ENCODE measurements at regions of chr12 and their contacts with region 1.

Region 1: DNA sequence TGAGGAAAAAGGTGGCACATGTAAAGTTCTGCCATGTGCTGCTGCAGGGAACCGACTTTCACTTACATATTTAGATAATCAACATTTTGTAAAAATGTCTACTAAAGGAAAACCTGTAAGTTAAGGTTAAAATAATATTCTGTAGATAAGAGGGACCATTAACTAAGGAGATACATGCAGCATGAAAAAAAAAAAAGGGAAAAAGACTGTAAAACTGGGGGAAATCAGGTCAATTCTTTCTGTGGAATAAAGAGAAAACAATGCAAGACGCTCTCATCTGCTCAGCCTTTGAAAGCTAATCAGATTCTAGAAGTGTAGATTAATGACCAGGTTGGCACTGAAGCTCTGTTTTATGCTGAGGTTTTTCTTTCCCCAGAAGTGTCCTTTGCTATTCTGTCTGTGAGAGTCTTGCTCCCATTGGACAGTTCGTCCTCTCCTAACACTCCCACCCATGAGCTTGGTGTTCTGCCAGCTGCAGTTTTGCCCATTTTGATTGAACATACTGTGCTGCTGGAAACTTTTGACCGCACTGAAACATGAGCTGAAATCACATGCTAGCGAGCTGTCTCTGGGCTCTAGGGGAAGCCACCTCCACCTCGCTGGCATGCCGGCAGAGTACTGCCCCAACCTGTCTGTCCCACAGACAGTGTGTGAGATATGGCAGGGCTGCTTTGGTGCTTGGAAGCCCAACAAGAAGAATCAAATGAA is 39.7 kb downstream of the PPTC7 start:
- DNase-seq: peak; percentile 100
- H3K4me3 Mint-ChIP-seq: peak overlapping the region; percentile 60
- H3K27ac Mint-ChIP-seq: peak overlapping the region; percentile 90
- H3K4me1 Mint-ChIP-seq: peaks cover 54% of the 10 kb centered on the region
- H3K27me3 Mint-ChIP-seq: no peaks in the 10 kb centered on the region
- CTCF ChIP-seq: no peak

Region 2: GRCh38 chr12:110468212-110469048 is 75.0 kb before region 1 on chr12 and contains the starts of genes FAM216A and GPN3:
- CTCF ChIA-PET with region 1: interaction called, 3 read pairs
- POLR2A ChIA-PET with region 1: interaction called, 16 read pairs
- intact Hi-C with region 1: no loop called
- DNase-seq: peak; percentile 99
- H3K4me3 Mint-ChIP-seq: peak within 1 kb of the TSS; percentile 88
- H3K27ac Mint-ChIP-seq: peak within 1 kb of the TSS; percentile 93
- H3K4me1 Mint-ChIP-seq: peaks cover 11% of the 10 kb centered on the region
- H3K27me3 Mint-ChIP-seq: no peaks in the 10 kb centered on the region
- CTCF ChIP-seq: no peak
- total RNA-seq, gene FAM216A: 19.9 and 25.8 TPM in 2 replicates
- total RNA-seq, gene GPN3: 16.1 and 18.1 TPM in 2 replicates

Region 3: DNA sequence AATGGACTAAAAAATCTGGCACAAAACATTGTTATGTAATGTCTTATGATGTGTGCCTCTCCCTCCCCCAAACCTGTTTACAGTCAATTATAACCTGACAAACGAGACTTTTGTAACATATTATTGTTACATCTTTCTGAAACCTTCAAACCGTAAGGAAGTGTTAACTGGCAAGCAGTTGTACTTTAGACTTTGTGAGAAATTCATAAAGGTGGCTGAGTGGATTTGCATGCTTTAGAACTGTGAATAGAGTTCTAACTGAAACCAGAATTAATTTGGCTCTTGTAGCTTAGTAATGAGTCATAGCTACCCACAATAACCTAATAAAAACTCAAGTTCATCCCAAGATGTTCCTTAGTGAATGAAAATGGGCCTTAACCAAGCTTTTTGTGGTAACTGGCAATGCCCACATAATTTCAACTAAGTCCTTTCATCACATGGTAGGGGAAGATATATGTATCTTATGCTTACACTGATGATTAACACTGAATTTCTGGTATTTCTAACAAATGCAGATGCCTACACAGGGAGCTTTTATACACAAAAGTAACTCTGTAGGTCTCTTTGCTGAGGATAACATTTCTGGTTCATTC is 11.6 kb before region 1 on chr12:
- CTCF ChIA-PET with region 1: interaction called, 7 read pairs
- POLR2A ChIA-PET with region 1: interaction called, 351 read pairs
- intact Hi-C with region 1: no loop called
- DNase-seq: peak; percentile 73
- H3K4me3 Mint-ChIP-seq: no peak overlapping the region
- H3K27ac Mint-ChIP-seq: peak overlapping the region; percentile 42
- H3K4me1 Mint-ChIP-seq: peaks cover 18% of the 10 kb centered on the region
- H3K27me3 Mint-ChIP-seq: no peaks in the 10 kb centered on the region
- CTCF ChIP-seq: no peak

Region 4: DNA sequence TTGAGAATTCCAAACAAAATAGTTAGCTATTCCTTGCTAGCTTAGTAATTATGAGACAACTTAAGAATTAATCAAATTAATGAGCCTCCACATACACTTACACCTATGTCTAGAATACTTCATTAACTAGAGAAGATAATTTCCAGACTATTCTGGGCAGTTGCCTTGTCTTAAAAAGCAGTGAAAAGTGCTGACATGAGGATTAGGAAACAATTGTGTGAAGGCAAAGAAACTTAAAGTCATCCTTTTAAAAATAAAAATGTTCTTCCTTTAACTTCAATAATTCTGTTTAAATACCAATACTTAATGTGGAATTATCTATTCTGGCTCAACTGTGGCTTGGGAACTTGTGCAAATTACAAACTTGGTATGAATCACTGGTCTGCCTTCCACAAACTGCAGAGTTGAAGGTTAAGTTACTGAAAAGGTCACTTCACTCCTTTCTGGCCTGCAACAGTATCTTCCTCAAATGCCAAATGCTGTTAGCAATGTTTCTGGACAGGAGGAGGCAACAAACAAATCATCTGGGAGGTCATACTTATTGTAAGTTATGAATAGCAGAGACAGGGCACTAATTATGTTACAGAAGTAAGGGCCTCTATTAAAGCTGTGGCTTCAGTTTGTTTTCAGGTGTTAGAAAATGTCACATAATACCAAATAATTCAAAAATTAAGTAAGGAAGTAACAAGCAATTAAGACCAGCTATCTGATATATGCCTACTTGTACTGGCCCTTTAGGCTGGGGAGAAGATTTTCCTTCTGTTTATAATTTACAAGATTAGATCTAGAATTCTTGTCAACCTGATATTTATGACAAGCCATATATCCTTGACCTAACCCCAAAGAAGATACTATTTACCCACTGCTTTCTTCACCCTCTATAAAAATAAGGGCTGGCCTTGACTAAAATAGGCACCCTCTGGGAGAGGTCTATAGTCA is 20.6 kb after region 1 on chr12:
- CTCF ChIA-PET with region 1: interaction called, 5 read pairs
- POLR2A ChIA-PET with region 1: interaction called, 36 read pairs
- intact Hi-C with region 1: no loop called
- DNase-seq: no peak
- H3K4me3 Mint-ChIP-seq: peak overlapping the region; percentile 41
- H3K27ac Mint-ChIP-seq: peak overlapping the region; percentile 80
- H3K4me1 Mint-ChIP-seq: peaks cover 37% of the 10 kb centered on the region
- H3K27me3 Mint-ChIP-seq: no peaks in the 10 kb centered on the region
- CTCF ChIP-seq: no peak